CD4-positive, alpha-beta memory T cell (primary cell): ENCODE measurements at regions of chr1 and their contacts with region 1.

Region 1: GRCh38 chr1:32240140-32240951 is 6.7 kb upstream of the FAM167B start:
- DNase-seq: peak; percentile 53 to 75 (median 55)
- H3K4me3 ChIP-seq: peak overlapping the region; percentile 81
- H3K4me3 Mint-ChIP-seq: peak overlapping the region; percentile 87 to 93 (median 90)
- H3K27ac ChIP-seq: peak overlapping the region; percentile 48
- H3K27ac Mint-ChIP-seq: peak overlapping the region; percentile 68 to 88 (median 79)
- H3K4me1 ChIP-seq: peaks cover 14% of the 10 kb centered on the region
- H3K4me1 Mint-ChIP-seq: peaks cover 0 to 35% (median 15%) of the 10 kb centered on the region in 4 donors
- H3K27me3 ChIP-seq: no peaks in the 10 kb centered on the region
- H3K27me3 Mint-ChIP-seq: no peaks in the 10 kb centered on the region

Region 2: DNA sequence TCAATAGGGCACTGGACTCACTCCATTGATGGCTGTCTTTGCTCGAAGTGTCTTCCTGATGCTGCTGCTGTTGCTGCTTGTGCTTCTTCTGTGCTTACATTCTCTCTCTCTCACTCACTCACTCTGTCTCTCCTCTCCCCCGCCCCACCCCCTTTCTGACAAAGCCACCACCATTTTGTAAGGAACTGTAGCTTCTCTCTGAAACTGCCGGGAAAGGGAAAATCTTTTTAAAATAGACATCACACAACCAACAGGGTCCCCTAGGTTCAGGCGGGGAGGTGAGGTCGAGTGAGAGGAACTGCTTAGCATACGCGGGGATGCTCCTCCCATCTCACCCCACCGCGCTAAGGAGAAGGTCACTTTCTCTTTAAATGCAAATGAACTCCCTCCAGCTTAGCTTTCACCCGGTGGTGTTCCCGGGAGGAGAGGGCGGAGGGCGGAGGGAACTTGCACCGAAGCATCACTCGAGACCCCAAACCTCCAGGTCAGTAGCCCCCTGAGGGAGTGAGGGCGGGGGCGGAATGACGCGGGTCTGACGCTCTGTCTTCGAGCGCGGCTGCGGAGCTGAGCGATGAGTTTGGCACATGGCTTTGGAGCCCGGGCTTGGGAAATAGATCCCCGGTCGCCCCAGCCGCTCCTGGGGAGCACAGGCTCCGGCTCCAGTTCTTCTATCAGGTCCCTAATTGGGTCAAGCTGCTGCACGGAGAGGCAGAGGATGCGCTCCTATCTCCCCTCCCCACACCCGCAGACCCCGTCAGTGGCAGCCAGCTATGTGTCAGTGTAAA is 39.9 kb before region 1 on chr1 and contains the start of gene CCDC28B:
- CTCF ChIA-PET with region 1: interaction called, 5 read pairs
- POLR2A ChIA-PET with region 1: interaction called, 14 read pairs
- intact Hi-C with region 1: no loop called
- DNase-seq: peak; percentile 51 to 73 (median 58)
- H3K4me3 ChIP-seq: peak within 1 kb of the TSS; percentile 57 to 85
- H3K4me3 Mint-ChIP-seq: peak within 1 kb of the TSS; percentile 85 to 95 (median 92)
- H3K27ac ChIP-seq: peak within 1 kb of the TSS; percentile 84
- H3K27ac Mint-ChIP-seq: peak within 1 kb of the TSS; percentile 87 to 97 (median 95)
- H3K4me1 ChIP-seq: peaks cover 59% of the 10 kb centered on the region
- H3K4me1 Mint-ChIP-seq: peaks cover 38 to 76% (median 56%) of the 10 kb centered on the region in 4 donors
- H3K27me3 ChIP-seq: no peaks in the 10 kb centered on the region
- H3K27me3 Mint-ChIP-seq: no peaks in the 10 kb centered on the region
- total RNA-seq, gene CCDC28B: 4.2 to 5.1 TPM

Region 3: GRCh38 chr1:32228771-32229170 is 11.6 kb before region 1 on chr1:
- CTCF ChIA-PET with region 1: interaction called, 5 read pairs
- POLR2A ChIA-PET with region 1: interaction called, 24 read pairs
- intact Hi-C with region 1: no loop called
- DNase-seq: no peak
- H3K4me3 ChIP-seq: no peak overlapping the region
- H3K4me3 Mint-ChIP-seq: no peak overlapping the region
- H3K27ac ChIP-seq: no peak overlapping the region
- H3K27ac Mint-ChIP-seq: peak overlapping the region in 1 of 7 donors; percentile 6
- H3K4me1 ChIP-seq: peaks cover 6% of the 10 kb centered on the region
- H3K4me1 Mint-ChIP-seq: peaks cover 7 to 16% (median 12%) of the 10 kb centered on the region in 4 donors
- H3K27me3 ChIP-seq: no peaks in the 10 kb centered on the region
- H3K27me3 Mint-ChIP-seq: no peaks in the 10 kb centered on the region

Region 4: DNA sequence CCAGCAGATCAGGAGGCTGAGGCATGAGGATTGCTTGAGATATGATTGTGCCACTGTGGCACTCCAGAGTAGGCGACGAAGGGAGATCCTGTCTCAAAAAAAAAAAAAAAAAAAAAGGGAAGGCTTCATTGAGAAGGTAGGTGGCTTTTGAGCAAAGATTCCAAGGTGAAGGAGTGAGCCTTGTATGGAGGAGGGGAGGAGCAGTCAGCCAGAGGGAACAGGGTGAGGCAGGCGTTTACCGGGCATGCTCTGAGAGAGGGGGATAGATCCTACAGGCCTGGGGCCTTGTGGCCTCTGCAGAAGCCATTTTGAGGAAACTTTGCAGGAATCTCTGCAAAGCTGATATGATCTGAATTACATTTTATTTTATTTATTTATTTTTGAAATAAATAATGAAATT is 46.4 kb after region 1 on chr1:
- CTCF ChIA-PET with region 1: interaction called, 49 read pairs
- POLR2A ChIA-PET with region 1: interaction called, 199 read pairs
- intact Hi-C with region 1: no loop called
- DNase-seq: no peak
- H3K4me3 ChIP-seq: no peak overlapping the region
- H3K4me3 Mint-ChIP-seq: no peak overlapping the region
- H3K27ac ChIP-seq: no peak overlapping the region
- H3K27ac Mint-ChIP-seq: peak overlapping the region in 2 of 7 donors; percentile 83 to 84
- H3K4me1 ChIP-seq: peaks cover 19% of the 10 kb centered on the region
- H3K4me1 Mint-ChIP-seq: peaks cover 7 to 17% (median 13%) of the 10 kb centered on the region in 4 donors
- H3K27me3 ChIP-seq: no peaks in the 10 kb centered on the region
- H3K27me3 Mint-ChIP-seq: no peaks in the 10 kb centered on the region

Region 5: DNA sequence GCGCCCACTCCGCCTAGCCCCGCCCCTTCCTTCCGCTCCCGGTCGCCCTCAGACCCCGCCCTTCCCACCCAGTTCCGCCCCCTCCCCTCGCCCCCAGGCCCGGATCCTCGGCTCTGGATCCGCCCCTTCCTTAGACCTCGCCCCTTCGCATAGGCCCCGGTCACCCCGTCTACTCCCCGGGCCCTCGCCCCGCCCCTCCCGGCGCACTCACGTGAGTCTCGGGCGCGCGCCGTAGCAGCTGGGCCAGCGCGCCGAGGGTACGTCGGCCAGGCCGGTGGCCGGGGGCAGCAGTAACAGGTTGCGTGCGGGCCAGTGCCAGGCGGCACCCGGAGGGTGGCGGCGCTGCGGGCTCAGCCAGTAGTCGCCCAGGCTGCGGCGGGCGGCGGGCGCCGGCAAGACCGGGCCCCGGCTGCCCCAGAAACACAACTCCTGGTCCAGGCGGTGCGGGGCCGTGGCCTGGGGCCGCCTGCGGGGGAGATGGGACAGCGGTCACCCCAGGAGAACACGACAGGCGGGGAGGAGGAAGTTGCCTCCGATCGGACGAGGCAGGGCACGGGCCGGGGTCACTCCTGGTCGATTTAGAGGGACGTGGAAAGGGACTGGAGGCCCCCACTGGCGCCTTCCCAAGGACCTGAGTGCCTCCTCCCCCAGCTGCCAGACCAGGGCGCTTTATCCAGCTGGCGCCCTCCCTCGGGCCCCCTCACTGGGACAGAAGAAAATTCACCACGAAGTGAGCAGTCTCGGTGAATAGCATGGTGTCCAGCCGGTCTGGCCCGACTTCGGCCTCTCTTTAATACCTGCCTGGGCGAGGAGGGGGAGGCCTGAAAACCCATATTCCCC is 111.3 kb after region 1 on chr1:
- CTCF ChIA-PET with region 1: interaction called, 6 read pairs
- POLR2A ChIA-PET with region 1: interaction called, 11 read pairs
- intact Hi-C with region 1: loop called (anchors 2 kb)
- DNase-seq: peak; percentile 90 to 94 (median 91)
- H3K4me3 ChIP-seq: peak overlapping the region; percentile 52 to 65
- H3K4me3 Mint-ChIP-seq: peak overlapping the region; percentile 71 to 90 (median 82)
- H3K27ac ChIP-seq: peak overlapping the region; percentile 71
- H3K27ac Mint-ChIP-seq: peak overlapping the region; percentile 86 to 97 (median 92)
- H3K4me1 ChIP-seq: peaks cover 39% of the 10 kb centered on the region
- H3K4me1 Mint-ChIP-seq: peaks cover 22 to 62% (median 39%) of the 10 kb centered on the region in 4 donors
- H3K27me3 ChIP-seq: no peaks in the 10 kb centered on the region
- H3K27me3 Mint-ChIP-seq: no peaks in the 10 kb centered on the region

Region 6: DNA sequence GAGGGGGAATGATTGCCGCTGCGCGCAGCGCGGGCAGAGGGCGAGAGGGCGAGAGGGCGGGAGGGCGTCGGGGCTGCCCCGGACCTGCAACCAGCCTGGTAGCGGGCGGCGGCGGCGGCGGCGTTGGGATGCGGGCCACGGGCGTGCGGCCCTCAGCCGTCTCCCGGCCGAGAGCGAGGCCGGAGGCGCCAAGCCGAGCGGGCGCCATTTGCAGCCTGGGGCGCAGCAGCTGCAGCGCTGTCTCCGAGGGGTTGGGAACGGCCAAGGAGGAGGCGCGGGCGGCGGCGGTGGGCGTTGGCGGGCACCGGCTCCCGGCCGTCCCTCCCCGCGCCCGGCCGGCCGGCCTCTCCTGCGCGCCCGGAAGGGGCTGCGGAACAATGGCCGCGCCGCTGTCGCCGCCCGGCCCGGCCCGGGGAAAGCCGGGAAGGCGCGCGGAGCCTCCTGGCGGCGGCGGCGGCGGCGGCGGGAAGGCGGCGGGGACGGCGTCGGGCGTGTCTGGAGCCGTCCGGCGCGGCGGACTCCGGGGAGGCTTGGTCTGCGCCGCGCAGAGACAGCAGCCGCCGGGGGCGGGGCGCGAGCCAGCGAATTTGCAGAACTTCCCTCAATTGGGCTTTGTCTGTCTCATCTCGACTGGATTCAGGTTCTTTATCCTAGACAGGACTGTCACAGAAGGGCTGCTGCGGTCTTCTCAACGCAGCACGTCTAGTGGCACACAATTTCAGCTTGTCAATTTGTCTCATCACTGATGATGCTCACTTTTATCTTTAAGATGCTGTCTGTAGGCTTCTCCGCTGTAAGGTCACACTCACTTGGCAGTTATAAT is 260.3 kb after region 1 on chr1:
- CTCF ChIA-PET with region 1: no interaction called
- POLR2A ChIA-PET with region 1: no interaction called
- intact Hi-C with region 1: no loop called
- DNase-seq: peak in 2 of 5 donors; percentile 8 to 13
- H3K4me3 ChIP-seq: peak overlapping the region in 1 of 2 donors; percentile 11
- H3K4me3 Mint-ChIP-seq: peak overlapping the region; percentile 78 to 86 (median 82)
- H3K27ac ChIP-seq: no peak overlapping the region
- H3K27ac Mint-ChIP-seq: no peak overlapping the region
- H3K4me1 ChIP-seq: peaks cover 3% of the 10 kb centered on the region
- H3K4me1 Mint-ChIP-seq: peaks cover 0 to 4% (median 1%) of the 10 kb centered on the region in 4 donors
- H3K27me3 ChIP-seq: no peaks in the 10 kb centered on the region
- H3K27me3 Mint-ChIP-seq: peaks cover 18 to 20% of the 10 kb centered on the region in 2 donors